Calu3 (cell line): ENCODE measurements at regions of chr1 and their contacts with region 1.

Region 1: DNA sequence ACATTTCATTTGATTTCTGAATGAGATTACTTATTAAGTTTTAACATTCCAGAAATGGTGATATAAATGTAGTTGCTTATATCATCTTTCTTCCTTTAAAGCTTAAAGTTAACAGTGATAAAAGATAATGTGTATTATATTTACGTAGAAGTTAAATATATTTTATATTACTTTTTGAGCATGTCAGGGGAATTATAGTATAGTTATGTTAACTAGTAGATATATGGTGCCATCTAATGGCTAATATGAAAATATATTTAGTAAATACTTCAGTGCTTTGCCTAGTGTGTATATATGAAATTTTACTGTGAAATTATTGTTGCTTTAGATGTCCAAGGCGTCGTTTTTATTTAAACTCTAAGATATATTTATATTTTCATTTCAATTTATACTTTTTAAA is 51.5 kb downstream of the SYT14 start:
- DNase-seq: no peak
- H3K4me3 Mint-ChIP-seq: no peak overlapping the region
- H3K27ac Mint-ChIP-seq: peak overlapping the region; percentile 90
- H3K4me1 Mint-ChIP-seq: peaks cover 18% of the 10 kb centered on the region
- H3K27me3 Mint-ChIP-seq: no peaks in the 10 kb centered on the region
- CTCF ChIP-seq: peak; percentile 46

Region 2: GRCh38 chr1:209875515-209875914 is 114.0 kb before region 1 on chr1:
- CTCF ChIA-PET with region 1: interaction called, 4 read pairs
- intact Hi-C with region 1: loop called (anchors 1 kb)
- DNase-seq: peak; percentile 31
- H3K4me3 Mint-ChIP-seq: no peak overlapping the region
- H3K27ac Mint-ChIP-seq: no peak overlapping the region
- H3K4me1 Mint-ChIP-seq: peaks cover 66% of the 10 kb centered on the region
- H3K27me3 Mint-ChIP-seq: no peaks in the 10 kb centered on the region
- CTCF ChIP-seq: no peak

Region 3: GRCh38 chr1:209884665-209885117 is 104.8 kb before region 1 on chr1:
- CTCF ChIA-PET with region 1: interaction called, 4 read pairs
- intact Hi-C with region 1: loop called (anchors 1 kb)
- DNase-seq: peak; percentile 95
- H3K4me3 Mint-ChIP-seq: peak overlapping the region; percentile 48
- H3K27ac Mint-ChIP-seq: peak overlapping the region; percentile 92
- H3K4me1 Mint-ChIP-seq: peaks cover 72% of the 10 kb centered on the region
- H3K27me3 Mint-ChIP-seq: no peaks in the 10 kb centered on the region
- CTCF ChIP-seq: no peak

Region 4: GRCh38 chr1:210477381-210477783 is 487.9 kb after region 1 on chr1:
- CTCF ChIA-PET with region 1: no interaction called
- intact Hi-C with region 1: no loop called
- DNase-seq: no peak
- H3K4me3 Mint-ChIP-seq: no peak overlapping the region
- H3K27ac Mint-ChIP-seq: no peak overlapping the region
- H3K4me1 Mint-ChIP-seq: no peaks in the 10 kb centered on the region
- H3K27me3 Mint-ChIP-seq: peaks cover 39% of the 10 kb centered on the region
- CTCF ChIP-seq: no peak